Tibial artery (tissue), 4 donors: ENCODE measurements at regions of chr7 and their contacts with region 1.

Region 1: GRCh38 chr7:105795390-105795729 is 81.0 kb downstream of the ATXN7L1 start:
- DNase-seq: no peak
- H3K4me3 ChIP-seq: no peak overlapping the region
- H3K27ac ChIP-seq: peak overlapping the region; percentile 34 to 45
- H3K4me1 ChIP-seq: peaks cover 0 to 9% (median 0%) of the 10 kb centered on the region in 4 donors
- H3K27me3 ChIP-seq: no peaks in the 10 kb centered on the region
- CTCF ChIP-seq: no peak

Region 2: GRCh38 chr7:104482362-104483037 is 1312.9 kb before region 1 on chr7:
- intact Hi-C with region 1: loop called (anchors 10 kb)
- DNase-seq: no peak
- H3K4me3 ChIP-seq: no peak overlapping the region
- H3K27ac ChIP-seq: no peak overlapping the region
- H3K4me1 ChIP-seq: no peaks in the 10 kb centered on the region
- H3K27me3 ChIP-seq: no peaks in the 10 kb centered on the region
- CTCF ChIP-seq: no peak

Region 3: DNA sequence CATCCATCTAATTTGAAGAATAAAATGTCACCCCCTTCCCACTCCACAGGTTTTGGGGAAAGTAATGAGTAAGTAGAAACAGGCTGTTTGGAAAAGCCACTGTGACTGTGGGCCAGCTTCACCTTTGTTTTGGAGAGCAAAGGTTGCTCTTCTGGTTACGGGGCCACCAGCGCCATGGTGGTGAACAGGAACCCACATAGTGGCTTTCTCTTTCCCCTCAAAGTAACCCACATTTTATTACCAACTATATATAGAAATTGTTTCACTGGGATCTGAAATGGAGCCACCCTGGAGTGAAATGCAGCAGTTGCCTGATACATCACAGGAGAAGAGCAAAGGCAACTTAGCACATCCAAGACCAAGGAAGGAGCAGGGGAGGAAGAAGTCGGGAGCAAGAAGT is 101.8 kb before region 1 on chr7:
- intact Hi-C with region 1: no loop called
- DNase-seq: no peak
- H3K4me3 ChIP-seq: no peak overlapping the region
- H3K27ac ChIP-seq: no peak overlapping the region
- H3K4me1 ChIP-seq: peaks cover 0 to 14% (median 7%) of the 10 kb centered on the region in 4 donors
- H3K27me3 ChIP-seq: no peaks in the 10 kb centered on the region
- CTCF ChIP-seq: no peak

Region 4: DNA sequence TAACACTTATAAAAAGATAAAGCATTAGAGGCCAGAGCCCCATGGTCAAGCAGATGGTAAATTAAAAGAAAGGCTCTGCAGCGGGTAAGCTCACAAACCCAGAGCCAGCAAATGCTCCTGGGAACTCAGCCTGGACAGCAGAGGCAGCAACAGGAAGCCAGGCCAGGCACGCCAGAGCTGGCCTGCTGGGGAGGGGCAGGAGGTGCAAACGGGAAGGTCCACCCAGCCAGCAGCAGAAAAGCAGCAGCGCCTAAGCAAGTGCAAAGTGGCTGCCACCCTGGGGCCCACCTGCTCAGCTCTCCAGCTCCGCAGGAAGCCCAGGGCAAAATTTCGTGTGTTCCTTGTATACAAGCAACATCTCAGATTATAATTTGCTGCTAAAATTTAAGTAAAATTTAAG is 1591.8 kb after region 1 on chr7:
- intact Hi-C with region 1: no loop called
- DNase-seq: peak; percentile 47 to 88
- H3K4me3 ChIP-seq: no peak overlapping the region
- H3K27ac ChIP-seq: peak overlapping the region; percentile 51 to 70
- H3K4me1 ChIP-seq: peaks cover 0 to 39% (median 18%) of the 10 kb centered on the region in 4 donors
- H3K27me3 ChIP-seq: no peaks in the 10 kb centered on the region
- CTCF ChIP-seq: peak in 1 of 2 experiments; percentile 7